ENCODE measurements at regions of chr2 and their contacts with region 1.

Region 1: GRCh38 chr2:168118733-168119514 is 128.5 kb downstream of the STK39 start:
- DNase-seq: peak; percentile 27 to 65 (median 42)
- H3K4me3 ChIP-seq: peak overlapping the region in 1 of 3 experiments; percentile 62
- H3K4me3 Mint-ChIP-seq: no peak overlapping the region
- H3K27ac ChIP-seq: peak overlapping the region in 1 of 2 donors; percentile 57
- H3K27ac Mint-ChIP-seq: no peak overlapping the region
- H3K4me1 ChIP-seq: peaks cover 11 to 15% of the 10 kb centered on the region in 2 donors
- H3K4me1 Mint-ChIP-seq: no peaks in the 10 kb centered on the region
- H3K27me3 ChIP-seq: no peaks in the 10 kb centered on the region
- H3K27me3 Mint-ChIP-seq: no peaks in the 10 kb centered on the region
- CTCF ChIP-seq: peak; percentile 56

Region 2: DNA sequence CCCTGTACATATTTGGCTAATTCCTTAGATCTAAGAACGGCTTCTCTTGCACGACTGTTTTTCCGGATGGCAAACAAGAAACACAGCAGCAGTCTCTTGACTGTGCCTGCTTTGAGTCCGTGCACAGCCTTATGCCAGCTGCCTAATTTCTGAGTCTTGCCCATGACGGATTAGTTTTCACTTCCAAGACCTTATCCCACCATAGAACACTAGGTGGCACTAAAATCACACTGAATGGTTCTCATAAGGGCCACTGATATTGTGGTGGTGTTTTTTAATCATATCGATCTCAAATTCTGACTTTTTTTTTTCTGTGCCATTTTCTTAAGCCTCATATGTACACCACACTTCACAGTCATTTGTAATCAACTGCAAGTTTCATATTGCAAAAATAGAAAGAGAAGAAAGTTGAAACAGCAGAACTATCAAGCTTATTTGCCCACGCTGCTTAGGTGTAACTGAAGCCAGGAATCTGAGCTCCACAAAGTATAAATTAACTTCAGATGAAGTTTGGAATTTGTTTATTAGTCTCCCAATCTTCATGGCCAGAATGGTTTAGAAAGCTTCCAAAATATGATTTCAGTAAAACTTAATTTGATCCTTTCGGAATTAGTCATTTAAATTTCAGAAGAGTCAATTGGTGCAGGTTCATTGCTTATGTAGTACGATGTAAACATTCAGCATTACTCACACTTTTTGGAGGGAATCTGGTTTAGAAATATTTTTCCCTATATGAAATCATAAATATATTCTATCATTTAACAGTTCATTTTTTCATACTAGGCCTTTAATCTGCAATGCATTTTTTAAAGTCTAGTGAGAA is 1579.4 kb before region 1 on chr2:
- intact Hi-C with region 1: loop called in 1 of 2 experiments (anchors 5 kb)
- DNase-seq: peak; percentile 11 to 36 (median 25)
- H3K4me3 ChIP-seq: no peak overlapping the region
- H3K4me3 Mint-ChIP-seq: no peak overlapping the region
- H3K27ac ChIP-seq: no peak overlapping the region
- H3K27ac Mint-ChIP-seq: no peak overlapping the region
- H3K4me1 ChIP-seq: no peaks in the 10 kb centered on the region
- H3K4me1 Mint-ChIP-seq: peaks cover 6% of the 10 kb centered on the region
- H3K27me3 ChIP-seq: no peaks in the 10 kb centered on the region
- H3K27me3 Mint-ChIP-seq: peaks cover 0 to 3% (median 1%) of the 10 kb centered on the region in 3 donors
- CTCF ChIP-seq: peak; percentile 90

Region 3: DNA sequence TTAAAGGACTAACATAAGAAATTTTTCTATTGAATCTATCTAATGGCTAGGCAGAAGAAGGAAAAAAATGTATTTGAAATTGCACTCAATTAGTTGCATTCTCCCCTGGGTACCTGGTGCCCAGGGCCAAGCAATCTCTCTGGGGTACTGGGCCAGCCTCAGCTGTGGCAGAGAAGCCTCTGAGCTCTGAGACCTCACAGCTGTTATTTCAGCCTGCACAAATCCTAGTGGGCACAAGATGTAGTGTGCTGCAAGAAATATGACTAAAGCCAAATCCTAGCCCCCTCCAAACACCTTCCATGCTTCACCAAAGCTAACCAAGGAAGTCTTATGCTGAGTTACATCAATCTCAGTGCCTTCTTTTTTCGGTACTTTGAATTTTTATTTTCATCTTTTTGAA is 349.9 kb before region 1 on chr2:
- intact Hi-C with region 1: no loop called
- DNase-seq: no peak
- H3K4me3 ChIP-seq: no peak overlapping the region
- H3K4me3 Mint-ChIP-seq: no peak overlapping the region
- H3K27ac ChIP-seq: no peak overlapping the region
- H3K27ac Mint-ChIP-seq: no peak overlapping the region
- H3K4me1 ChIP-seq: no peaks in the 10 kb centered on the region
- H3K4me1 Mint-ChIP-seq: no peaks in the 10 kb centered on the region
- H3K27me3 ChIP-seq: no peaks in the 10 kb centered on the region
- H3K27me3 Mint-ChIP-seq: no peaks in the 10 kb centered on the region
- CTCF ChIP-seq: no peak

Region 4: GRCh38 chr2:168060986-168061750 is 57.8 kb before region 1 on chr2:
- intact Hi-C with region 1: no loop called
- DNase-seq: no peak
- H3K4me3 ChIP-seq: no peak overlapping the region
- H3K4me3 Mint-ChIP-seq: no peak overlapping the region
- H3K27ac ChIP-seq: no peak overlapping the region
- H3K27ac Mint-ChIP-seq: no peak overlapping the region
- H3K4me1 ChIP-seq: no peaks in the 10 kb centered on the region
- H3K4me1 Mint-ChIP-seq: no peaks in the 10 kb centered on the region
- H3K27me3 ChIP-seq: no peaks in the 10 kb centered on the region
- H3K27me3 Mint-ChIP-seq: no peaks in the 10 kb centered on the region
- CTCF ChIP-seq: no peak